Vagina (tissue), 2 donors: ENCODE measurements at regions of chr7 and their contacts with region 1.

Region 1: GRCh38 chr7:100469227-100470044 is 5.4 kb upstream of the SPACDR start:
- DNase-seq: no peak
- H3K4me3 ChIP-seq: no peak overlapping the region
- H3K27ac ChIP-seq: peak overlapping the region; percentile 42
- H3K4me1 ChIP-seq: peaks cover 62% of the 10 kb centered on the region
- H3K27me3 ChIP-seq: no peaks in the 10 kb centered on the region
- CTCF ChIP-seq: peak; percentile 95 to 98 (median 96)
- POLR2A ChIP-seq: no peak

Region 2: DNA sequence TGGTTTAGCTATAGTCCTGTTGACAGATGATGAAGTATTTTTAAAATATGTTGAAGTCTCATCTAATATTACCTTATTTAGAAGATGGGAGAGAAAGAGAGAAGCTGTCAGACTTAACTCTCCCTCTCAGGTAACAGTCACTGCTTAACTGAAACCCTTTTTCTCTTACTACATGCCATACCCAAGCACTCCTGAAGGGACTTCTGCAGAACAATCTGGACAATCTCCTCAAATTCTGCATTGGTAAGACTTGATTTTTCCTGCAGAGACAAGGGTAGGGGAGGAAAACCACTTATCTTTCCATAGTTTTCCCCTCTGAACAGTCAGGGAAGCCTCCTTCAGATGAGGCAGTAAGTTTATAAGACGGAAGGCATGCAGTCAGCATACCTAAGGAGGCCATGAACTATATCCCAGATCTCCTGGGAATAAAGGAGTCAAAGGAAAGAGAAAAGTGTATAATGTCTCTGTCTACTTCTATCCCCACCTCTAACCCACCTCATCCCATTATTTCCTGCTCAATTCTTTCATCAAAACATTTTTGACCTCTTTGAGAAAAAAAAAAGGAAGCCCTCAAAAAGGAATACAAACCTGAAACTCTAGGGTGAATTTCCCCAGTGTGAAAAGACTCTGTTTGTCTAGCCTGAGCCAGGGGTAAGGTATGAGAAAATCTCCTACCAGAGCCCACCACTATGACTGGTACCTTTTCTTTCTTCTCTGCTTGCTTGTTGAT is 50.3 kb before region 1 on chr7:
- intact Hi-C with region 1: no loop called
- DNase-seq: no peak
- H3K4me3 ChIP-seq: no peak overlapping the region
- H3K27ac ChIP-seq: no peak overlapping the region
- H3K4me1 ChIP-seq: no peaks in the 10 kb centered on the region
- H3K27me3 ChIP-seq: no peaks in the 10 kb centered on the region
- CTCF ChIP-seq: no peak
- POLR2A ChIP-seq: no peak

Region 3: GRCh38 chr7:100556541-100556940 is 87.1 kb after region 1 on chr7:
- intact Hi-C with region 1: loop called (anchors 5 kb)
- DNase-seq: no peak
- H3K4me3 ChIP-seq: no peak overlapping the region
- H3K27ac ChIP-seq: no peak overlapping the region
- H3K4me1 ChIP-seq: no peaks in the 10 kb centered on the region
- H3K27me3 ChIP-seq: no peaks in the 10 kb centered on the region
- CTCF ChIP-seq: no peak
- POLR2A ChIP-seq: no peak